ENCODE measurements at regions of chr15 and their contacts with region 1.

Region 1: DNA sequence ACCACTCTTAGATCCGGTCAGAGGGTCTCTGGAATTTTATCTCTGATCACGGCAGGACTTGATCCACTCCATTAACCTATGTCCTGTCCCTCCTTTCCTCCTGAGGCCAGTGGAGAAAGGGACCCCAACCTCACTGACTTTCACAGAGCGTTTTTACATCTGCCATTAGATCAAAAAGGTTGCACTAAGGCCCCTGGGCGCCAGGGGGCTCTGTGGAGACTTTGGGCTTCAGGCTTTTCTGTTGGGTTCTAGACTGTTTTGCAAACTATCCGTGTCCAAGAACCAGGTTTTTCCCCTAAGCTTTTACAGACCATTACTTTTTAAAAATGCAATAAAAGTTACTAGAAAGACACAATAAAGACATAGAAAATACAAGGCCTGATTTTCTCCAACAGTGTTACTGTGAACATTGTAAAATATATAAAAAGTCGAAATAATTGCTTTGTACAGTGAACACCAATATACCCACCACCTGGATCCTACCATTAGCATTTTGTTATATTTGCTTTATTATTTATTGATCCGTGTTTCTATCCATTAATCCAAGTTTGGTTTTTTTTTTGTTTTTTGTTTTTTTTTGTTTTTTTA is 159.7 kb downstream of the POLR2M start:
- DNase-seq: peak; percentile 46 to 62
- ATAC-seq: peak in 3 of 8 donors; percentile 52 to 55 (median 54)
- H3K4me3 ChIP-seq: no peak overlapping the region
- H3K27ac ChIP-seq: no peak overlapping the region
- H3K4me1 ChIP-seq: no peaks in the 10 kb centered on the region
- H3K27me3 ChIP-seq: peaks cover 0 to 21% (median 3%) of the 10 kb centered on the region in 7 donors
- CTCF ChIP-seq: peak; percentile 67 to 84 (median 79)

Region 2: DNA sequence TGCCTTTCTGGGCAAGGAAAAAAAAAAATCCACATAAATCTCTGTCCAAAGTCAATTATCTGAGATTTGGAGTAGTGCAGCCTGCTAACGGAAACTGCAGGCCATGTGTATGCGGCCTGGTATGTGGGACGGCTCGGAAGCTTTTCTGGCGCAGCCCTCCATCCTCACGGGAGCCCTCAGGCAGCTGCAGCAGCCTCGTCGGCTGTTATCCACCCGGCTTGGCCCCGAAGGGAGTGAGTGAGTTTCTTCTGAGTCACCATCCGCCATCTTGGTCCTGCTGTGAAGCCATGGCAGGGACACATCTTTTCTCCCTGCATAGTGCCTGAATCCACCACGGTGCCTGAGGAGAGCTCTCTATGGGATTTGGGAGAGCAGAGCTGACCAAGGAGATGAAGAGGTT is 97.0 kb before region 1 on chr15:
- intact Hi-C with region 1: loop called in 1 of 10 experiments (anchors 10 kb)
- DNase-seq: peak; percentile 76 to 79
- ATAC-seq: peak; percentile 87 to 99 (median 96)
- H3K4me3 ChIP-seq: no peak overlapping the region
- H3K27ac ChIP-seq: peak overlapping the region in 8 of 10 donors; percentile 17 to 65 (median 40)
- H3K4me1 ChIP-seq: peaks cover 0 to 12% (median 0%) of the 10 kb centered on the region in 9 donors
- H3K27me3 ChIP-seq: no peaks in the 10 kb centered on the region
- CTCF ChIP-seq: no peak

Region 3: DNA sequence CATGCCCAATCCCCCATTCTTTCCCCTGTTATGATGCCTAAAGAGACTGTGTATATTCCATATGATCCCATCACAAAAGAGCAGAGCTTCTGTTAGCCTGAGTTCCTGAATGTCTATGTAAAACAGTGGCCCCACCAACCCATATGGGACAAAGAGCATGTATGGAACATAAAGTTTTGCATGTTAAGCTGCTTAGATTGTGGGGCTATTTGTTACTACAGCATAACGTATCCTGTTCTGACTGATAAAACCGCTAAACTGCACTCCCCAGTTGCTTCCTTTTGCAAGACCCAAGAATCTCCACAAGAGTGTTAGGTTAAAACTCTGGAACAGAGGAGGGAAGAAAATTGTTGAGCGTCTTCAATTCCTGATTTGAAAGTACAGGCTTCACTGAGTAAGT is 44.4 kb after region 1 on chr15:
- intact Hi-C with region 1: loop called in 1 of 10 experiments (anchors 1 kb)
- DNase-seq: no peak
- ATAC-seq: no peak
- H3K4me3 ChIP-seq: no peak overlapping the region
- H3K27ac ChIP-seq: no peak overlapping the region
- H3K4me1 ChIP-seq: peaks cover 0 to 26% (median 9%) of the 10 kb centered on the region in 9 donors
- H3K27me3 ChIP-seq: peaks cover 0 to 5% (median 0%) of the 10 kb centered on the region in 7 donors
- CTCF ChIP-seq: no peak

Region 4: GRCh38 chr15:58019503-58020376 is 153.5 kb after region 1 on chr15:
- intact Hi-C with region 1: no loop called
- DNase-seq: no peak
- ATAC-seq: no peak
- H3K4me3 ChIP-seq: no peak overlapping the region
- H3K27ac ChIP-seq: no peak overlapping the region
- H3K4me1 ChIP-seq: no peaks in the 10 kb centered on the region
- H3K27me3 ChIP-seq: peaks cover 0 to 3% (median 0%) of the 10 kb centered on the region in 7 donors
- CTCF ChIP-seq: no peak

Region 5: DNA sequence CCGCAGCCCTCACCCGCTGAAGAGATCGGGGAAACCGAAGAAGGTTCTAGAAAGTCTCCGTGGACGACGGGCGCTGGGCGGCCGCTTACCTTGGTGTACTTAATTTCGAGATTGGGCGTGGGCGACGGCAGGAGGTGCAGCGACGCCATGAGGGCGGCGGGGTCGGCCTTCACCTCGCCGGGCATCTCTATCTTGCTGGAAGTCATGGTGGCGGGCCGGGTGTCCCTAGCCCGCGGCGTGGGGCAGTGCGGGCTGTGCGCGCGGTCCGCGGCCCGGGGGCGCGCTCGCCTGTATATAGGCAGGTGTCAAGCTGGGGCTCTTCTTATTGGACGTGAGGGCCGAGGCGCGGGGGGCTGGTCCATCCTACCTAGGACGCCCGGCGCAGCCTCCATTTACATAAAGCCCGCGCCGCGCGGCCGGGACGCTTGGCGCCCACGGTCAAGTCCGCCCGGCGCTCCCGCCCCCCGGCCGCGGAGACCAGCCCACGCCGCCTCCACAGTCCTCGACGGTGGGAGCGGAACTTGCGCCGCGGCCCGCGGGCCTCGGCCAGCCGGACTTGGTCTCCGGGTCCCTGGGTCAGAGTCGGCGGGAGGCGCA is 199.3 kb after region 1 on chr15 and contains the start of gene ALDH1A2:
- intact Hi-C with region 1: loop called (anchors 1 to 10 kb)
- DNase-seq: peak; percentile 25 to 53
- ATAC-seq: peak; percentile 63 to 82 (median 68)
- H3K4me3 ChIP-seq: peak within 1 kb of the TSS; percentile 11 to 68 (median 61)
- H3K27ac ChIP-seq: peak within 1 kb of the TSS; percentile 4 to 89 (median 66)
- H3K4me1 ChIP-seq: peaks cover 0 to 25% (median 12%) of the 10 kb centered on the region in 9 donors
- H3K27me3 ChIP-seq: peaks cover 0 to 95% (median 52%) of the 10 kb centered on the region in 7 donors
- CTCF ChIP-seq: no peak
- total RNA-seq, gene ALDH1A2: 5.0 to 21.0 (median 11.3) TPM